ENCODE measurements at regions of chr4 and their contacts with region 1.

Region 1: GRCh38 chr4:110005461-110006056 is 92.9 kb downstream of the EGF start:
- DNase-seq: no peak
- ATAC-seq: peak; percentile 60
- H3K4me3 Mint-ChIP-seq: no peak overlapping the region
- H3K27ac Mint-ChIP-seq: no peak overlapping the region
- H3K4me1 Mint-ChIP-seq: no peaks in the 10 kb centered on the region
- H3K27me3 Mint-ChIP-seq: no peaks in the 10 kb centered on the region

Region 2: GRCh38 chr4:109912706-109913595 is 92.6 kb before region 1 on chr4 and contains the start of gene EGF:
- CTCF ChIA-PET with region 1: no interaction called
- POLR2A ChIA-PET with region 1: no interaction called
- intact Hi-C with region 1: no loop called
- DNase-seq: no peak
- ATAC-seq: peak; percentile 33
- H3K4me3 Mint-ChIP-seq: no peak within 1 kb of the TSS
- H3K27ac Mint-ChIP-seq: no peak within 1 kb of the TSS
- H3K4me1 Mint-ChIP-seq: peaks cover 2% of the 10 kb centered on the region
- H3K27me3 Mint-ChIP-seq: peaks cover 24% of the 10 kb centered on the region
- total RNA-seq, gene EGF: 0.34 TPM in 1 of 2 experiments, not detected in the other

Region 3: DNA sequence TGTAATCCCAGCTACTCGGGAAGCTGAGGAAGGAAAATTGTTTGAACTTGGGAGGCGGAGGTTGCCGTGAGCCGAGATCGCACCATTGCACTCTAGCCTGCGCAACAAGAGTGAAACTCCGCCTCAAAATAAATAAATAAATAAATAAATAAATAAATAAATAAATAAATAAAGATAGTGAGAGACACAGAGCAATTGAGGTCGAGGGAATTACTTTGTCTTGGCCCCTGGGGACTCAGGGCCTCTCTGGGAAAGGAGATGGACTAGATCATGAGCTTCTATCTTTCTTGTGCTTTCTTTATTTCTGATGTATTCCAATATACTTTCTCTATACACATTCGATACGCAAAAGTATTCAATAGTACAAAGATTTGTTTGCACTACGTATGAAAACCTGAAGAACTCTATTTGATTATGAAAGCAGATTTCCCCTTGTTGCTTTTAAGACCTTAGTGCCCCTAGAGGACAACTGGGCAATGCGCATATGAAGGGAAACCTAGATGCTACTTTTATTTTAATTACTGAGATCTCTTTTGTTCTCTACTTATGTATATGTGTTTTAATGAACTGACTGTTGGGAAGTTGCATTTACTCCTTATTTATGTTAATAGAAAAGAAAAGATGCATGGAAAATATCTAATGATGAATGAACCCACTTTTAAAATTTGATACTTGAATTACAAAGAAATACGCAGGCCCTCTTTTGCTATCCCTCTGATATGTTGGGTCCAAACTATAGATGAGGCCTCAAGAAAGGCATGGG is 205.6 kb after region 1 on chr4:
- CTCF ChIA-PET with region 1: interaction called, 3 read pairs
- POLR2A ChIA-PET with region 1: no interaction called
- intact Hi-C with region 1: loop called (anchors 1 to 2 kb)
- DNase-seq: peak; percentile 28
- ATAC-seq: peak; percentile 60
- H3K4me3 Mint-ChIP-seq: no peak overlapping the region
- H3K27ac Mint-ChIP-seq: no peak overlapping the region
- H3K4me1 Mint-ChIP-seq: peaks cover 2% of the 10 kb centered on the region
- H3K27me3 Mint-ChIP-seq: no peaks in the 10 kb centered on the region

Region 4: DNA sequence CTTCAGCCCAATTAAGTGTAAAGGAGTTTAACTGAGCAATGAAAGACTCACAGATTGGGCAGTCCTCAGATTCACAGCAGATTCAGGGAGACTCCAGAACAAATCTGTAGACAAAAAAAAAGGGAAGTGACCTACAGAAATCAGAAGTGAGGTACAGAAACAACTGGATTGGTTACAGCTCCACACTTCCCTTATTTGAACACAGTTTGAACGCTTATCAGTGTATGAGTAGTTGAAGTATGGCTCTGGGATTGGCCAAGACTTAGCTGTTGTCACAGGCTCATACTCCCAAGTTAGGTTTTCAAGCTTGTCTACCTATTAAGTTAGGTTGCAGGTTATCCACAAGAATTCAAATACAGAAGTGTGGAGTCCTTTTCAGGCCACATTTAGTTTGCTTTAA is 305.2 kb after region 1 on chr4:
- CTCF ChIA-PET with region 1: interaction called, 4 read pairs
- POLR2A ChIA-PET with region 1: no interaction called
- intact Hi-C with region 1: loop called in 1 of 2 experiments (anchors 2 kb)
- DNase-seq: no peak
- ATAC-seq: no peak
- H3K4me3 Mint-ChIP-seq: no peak overlapping the region
- H3K27ac Mint-ChIP-seq: no peak overlapping the region
- H3K4me1 Mint-ChIP-seq: no peaks in the 10 kb centered on the region
- H3K27me3 Mint-ChIP-seq: peaks cover 16% of the 10 kb centered on the region

Region 5: GRCh38 chr4:110493520-110493919 is 488.0 kb after region 1 on chr4:
- CTCF ChIA-PET with region 1: no interaction called
- POLR2A ChIA-PET with region 1: no interaction called
- intact Hi-C with region 1: no loop called
- DNase-seq: no peak
- ATAC-seq: no peak
- H3K4me3 Mint-ChIP-seq: no peak overlapping the region
- H3K27ac Mint-ChIP-seq: no peak overlapping the region
- H3K4me1 Mint-ChIP-seq: no peaks in the 10 kb centered on the region
- H3K27me3 Mint-ChIP-seq: peaks cover 12% of the 10 kb centered on the region